ENCODE measurements at regions of chrX and their contacts with region 1.

Region 1: DNA sequence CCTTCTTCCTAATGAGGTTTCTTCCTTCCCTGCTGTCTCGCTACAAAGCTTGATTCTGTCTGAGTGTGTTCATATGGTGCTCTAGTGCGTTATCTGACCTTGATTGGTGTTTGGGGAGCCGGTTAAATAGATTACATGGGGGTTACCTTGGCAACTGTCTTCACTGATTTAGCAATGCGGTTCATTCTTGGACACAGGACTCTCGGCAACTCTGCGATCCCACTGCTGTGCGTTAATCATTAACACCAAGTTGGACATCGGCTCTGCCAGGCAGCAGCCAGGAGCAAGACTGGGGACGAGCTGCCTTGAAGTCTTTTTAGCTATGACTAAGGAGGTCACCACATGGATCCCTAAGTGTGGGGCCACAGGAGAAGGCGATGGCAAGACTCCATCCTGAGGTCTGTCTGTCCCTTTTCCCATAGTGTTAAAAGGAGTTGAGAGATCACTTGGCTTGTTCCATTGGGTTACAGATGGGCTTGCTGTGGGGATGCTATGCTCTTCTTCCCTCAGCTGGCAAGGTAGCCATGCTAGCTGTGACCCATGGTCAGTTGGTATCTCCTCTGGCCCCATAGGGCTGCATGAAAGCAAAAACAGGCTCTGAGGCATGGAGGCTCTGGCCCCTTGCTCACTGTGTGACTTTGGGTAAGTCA is 93.4 kb upstream of the MAMLD1 start:
- DNase-seq: no peak
- H3K4me3 Mint-ChIP-seq: no peak overlapping the region
- H3K27ac Mint-ChIP-seq: no peak overlapping the region
- H3K4me1 Mint-ChIP-seq: no peaks in the 10 kb centered on the region
- H3K27me3 Mint-ChIP-seq: peaks cover 23% of the 10 kb centered on the region
- CTCF ChIP-seq: no peak

Region 2: DNA sequence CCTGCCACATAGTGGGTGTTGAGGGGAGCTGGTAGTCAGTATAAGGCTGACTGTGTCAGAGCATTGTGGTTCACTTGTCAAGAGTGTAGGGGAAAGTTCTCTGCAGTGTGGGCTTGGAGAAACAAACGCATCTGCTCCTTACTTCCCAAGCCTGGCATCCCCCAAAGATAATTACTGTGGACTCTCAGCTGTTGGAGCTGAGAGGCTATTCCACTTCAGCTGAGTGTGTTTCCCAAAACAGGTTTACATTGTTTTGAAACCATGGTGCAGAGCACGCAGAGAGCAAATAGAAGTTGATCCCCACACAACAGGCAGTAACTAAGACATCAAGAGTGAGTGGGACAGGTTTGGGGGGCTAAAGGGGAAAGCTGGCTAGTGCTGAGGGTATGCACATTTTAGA is 150.4 kb before region 1 on chrX:
- CTCF ChIA-PET with region 1: no interaction called
- POLR2A ChIA-PET with region 1: no interaction called
- intact Hi-C with region 1: no loop called
- DNase-seq: no peak
- H3K4me3 Mint-ChIP-seq: no peak overlapping the region
- H3K27ac Mint-ChIP-seq: no peak overlapping the region
- H3K4me1 Mint-ChIP-seq: no peaks in the 10 kb centered on the region
- H3K27me3 Mint-ChIP-seq: peaks cover 26% of the 10 kb centered on the region
- CTCF ChIP-seq: no peak

Region 3: GRCh38 chrX:150225756-150226155 is 44.0 kb before region 1 on chrX:
- CTCF ChIA-PET with region 1: no interaction called
- POLR2A ChIA-PET with region 1: no interaction called
- intact Hi-C with region 1: loop called (anchors 1 kb)
- DNase-seq: no peak
- H3K4me3 Mint-ChIP-seq: no peak overlapping the region
- H3K27ac Mint-ChIP-seq: no peak overlapping the region
- H3K4me1 Mint-ChIP-seq: no peaks in the 10 kb centered on the region
- H3K27me3 Mint-ChIP-seq: peaks cover 21% of the 10 kb centered on the region
- CTCF ChIP-seq: no peak

Region 4: DNA sequence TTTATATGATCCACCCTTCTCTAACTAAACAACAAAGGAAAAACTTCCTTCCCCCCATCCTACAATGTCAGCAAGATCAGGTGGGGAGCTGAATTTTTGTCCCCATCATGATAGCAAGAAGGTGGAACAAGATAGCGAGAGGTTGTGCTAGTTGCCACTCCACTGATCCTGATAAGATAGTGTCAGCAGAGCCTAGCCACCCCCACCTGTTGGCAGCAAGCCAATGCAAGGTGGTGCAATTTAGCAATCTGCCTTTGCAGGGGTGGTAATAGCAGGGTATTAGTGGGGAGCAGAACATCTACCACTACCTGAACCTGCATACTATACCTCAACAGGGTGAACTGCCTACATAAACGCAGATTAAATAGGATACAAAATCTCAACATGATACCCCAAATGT is 13.2 kb after region 1 on chrX:
- CTCF ChIA-PET with region 1: no interaction called
- POLR2A ChIA-PET with region 1: no interaction called
- intact Hi-C with region 1: no loop called
- DNase-seq: no peak
- H3K4me3 Mint-ChIP-seq: no peak overlapping the region
- H3K27ac Mint-ChIP-seq: no peak overlapping the region
- H3K4me1 Mint-ChIP-seq: no peaks in the 10 kb centered on the region
- H3K27me3 Mint-ChIP-seq: peaks cover 13% of the 10 kb centered on the region
- CTCF ChIP-seq: no peak

Region 5: DNA sequence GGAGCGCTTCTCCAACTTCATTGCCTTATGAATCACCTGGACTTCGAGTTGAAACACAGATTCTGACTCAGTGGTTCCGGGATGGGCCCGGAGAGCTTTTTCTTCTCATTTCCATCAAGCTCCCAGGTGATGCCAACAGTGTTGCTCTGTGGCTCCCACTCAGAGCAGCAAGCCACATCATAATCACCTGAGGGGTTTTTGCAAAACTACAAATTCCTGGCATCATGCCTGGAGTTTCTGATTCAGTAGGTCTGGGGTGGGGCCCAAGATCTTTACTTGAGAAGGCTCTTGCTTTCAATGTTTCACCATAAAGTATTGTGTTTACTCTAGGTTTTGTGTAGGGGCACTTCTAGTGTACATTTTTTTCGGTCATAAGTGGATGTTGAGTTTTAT is 305.7 kb after region 1 on chrX:
- CTCF ChIA-PET with region 1: no interaction called
- POLR2A ChIA-PET with region 1: no interaction called
- intact Hi-C with region 1: no loop called
- DNase-seq: peak; percentile 98
- H3K4me3 Mint-ChIP-seq: peak overlapping the region; percentile 64
- H3K27ac Mint-ChIP-seq: peak overlapping the region; percentile 94
- H3K4me1 Mint-ChIP-seq: peaks cover 34% of the 10 kb centered on the region
- H3K27me3 Mint-ChIP-seq: no peaks in the 10 kb centered on the region
- CTCF ChIP-seq: no peak

Measured in MCF 10A (cell line).